Prostate gland (tissue), 2 donors: ENCODE measurements at regions of chr4 and their contacts with region 1.

Region 1: DNA sequence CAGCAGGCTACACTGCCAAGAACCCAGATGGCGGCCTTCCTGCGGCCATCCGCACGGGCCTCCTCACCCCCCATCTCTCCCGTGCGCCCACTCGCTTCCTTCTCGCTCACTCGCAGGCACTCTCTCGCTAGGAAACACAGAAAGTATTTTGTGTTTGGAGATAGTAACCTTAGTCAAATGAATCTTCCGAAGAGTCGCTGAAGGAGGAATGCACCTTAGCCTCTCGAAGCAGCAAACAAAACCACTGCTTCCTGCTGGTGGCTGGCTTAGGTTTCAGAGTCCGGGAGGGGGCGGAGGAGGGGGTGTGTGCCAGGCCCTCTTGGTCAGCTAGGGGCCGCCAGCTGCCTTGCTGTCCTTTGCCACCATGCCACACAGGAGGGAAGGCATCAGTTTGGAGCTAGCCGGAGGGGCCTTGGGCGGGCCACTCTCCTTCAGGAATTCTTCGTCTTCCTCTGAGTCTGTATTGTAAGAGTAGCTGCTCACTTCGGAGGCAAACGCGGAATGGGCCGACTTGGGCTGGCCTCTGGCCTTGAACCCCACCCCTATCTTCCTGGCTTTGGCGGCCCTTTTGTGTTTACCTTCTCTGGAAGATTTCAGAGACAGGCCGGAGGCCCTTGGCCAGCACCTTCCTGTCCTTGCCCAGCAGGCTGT is 73.2 kb upstream of the UCP1 start:
- DNase-seq: peak; percentile 72
- H3K4me3 ChIP-seq: peak overlapping the region; percentile 25 to 37
- H3K27ac ChIP-seq: peak overlapping the region; percentile 80 to 82
- H3K4me1 ChIP-seq: peaks cover 9% of the 10 kb centered on the region
- H3K27me3 ChIP-seq: no peaks in the 10 kb centered on the region
- CTCF ChIP-seq: peak in 3 of 4 experiments; percentile 39 to 61 (median 56)
- POLR2A ChIP-seq: peak; percentile 27

Region 2: DNA sequence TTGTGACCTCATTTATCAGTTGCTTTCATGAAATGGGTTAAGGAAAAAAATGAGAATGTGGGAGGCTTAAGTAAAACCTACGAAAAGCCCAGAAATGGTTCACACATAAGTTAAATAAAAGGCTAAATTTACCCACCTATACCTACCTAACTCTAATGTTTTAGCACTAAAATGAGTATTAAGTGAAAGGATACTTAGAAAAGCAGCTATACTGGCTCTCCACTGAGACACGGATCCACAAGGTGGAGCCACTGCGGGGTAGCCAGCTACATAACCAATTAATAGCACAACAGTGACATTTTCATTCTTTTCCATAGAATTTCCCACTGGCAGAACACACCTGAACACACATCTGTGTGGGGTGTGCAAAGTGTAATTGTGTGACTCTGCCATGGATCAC is 589.9 kb before region 1 on chr4:
- intact Hi-C with region 1: no loop called
- DNase-seq: peak; percentile 30
- H3K4me3 ChIP-seq: no peak overlapping the region
- H3K27ac ChIP-seq: no peak overlapping the region
- H3K4me1 ChIP-seq: no peaks in the 10 kb centered on the region
- H3K27me3 ChIP-seq: no peaks in the 10 kb centered on the region
- CTCF ChIP-seq: peak; percentile 16 to 51 (median 46)
- POLR2A ChIP-seq: no peak

Region 3: GRCh38 chr4:140756319-140757231 is 114.7 kb after region 1 on chr4 and contains the start of gene TBC1D9:
- intact Hi-C with region 1: loop called (anchors 5 kb)
- DNase-seq: peak; percentile 67
- H3K4me3 ChIP-seq: peak within 1 kb of the TSS; percentile 69 to 87
- H3K27ac ChIP-seq: peak within 1 kb of the TSS; percentile 97 to 99
- H3K4me1 ChIP-seq: no peaks in the 10 kb centered on the region
- H3K27me3 ChIP-seq: no peaks in the 10 kb centered on the region
- CTCF ChIP-seq: peak in 3 of 4 experiments; percentile 21 to 33 (median 29)
- POLR2A ChIP-seq: peak; percentile 67
- total RNA-seq, gene TBC1D9: 28.6 to 34.2 TPM

Region 4: GRCh38 chr4:140839888-140840790 is 198.2 kb after region 1 on chr4:
- intact Hi-C with region 1: loop called (anchors 5 kb)
- DNase-seq: peak; percentile 27
- H3K4me3 ChIP-seq: no peak overlapping the region
- H3K27ac ChIP-seq: peak overlapping the region; percentile 25 to 39
- H3K4me1 ChIP-seq: no peaks in the 10 kb centered on the region
- H3K27me3 ChIP-seq: no peaks in the 10 kb centered on the region
- CTCF ChIP-seq: no peak
- POLR2A ChIP-seq: no peak